ENCODE measurements at regions of chr12 and their contacts with region 1.

Region 1: GRCh38 chr12:119649202-119649808 is 18.6 kb upstream of the PRKAB1 start:
- DNase-seq: no peak
- H3K4me3 Mint-ChIP-seq: no peak overlapping the region
- H3K27ac Mint-ChIP-seq: no peak overlapping the region
- H3K4me1 Mint-ChIP-seq: no peaks in the 10 kb centered on the region
- H3K27me3 Mint-ChIP-seq: peaks cover 8% of the 10 kb centered on the region

Region 2: DNA sequence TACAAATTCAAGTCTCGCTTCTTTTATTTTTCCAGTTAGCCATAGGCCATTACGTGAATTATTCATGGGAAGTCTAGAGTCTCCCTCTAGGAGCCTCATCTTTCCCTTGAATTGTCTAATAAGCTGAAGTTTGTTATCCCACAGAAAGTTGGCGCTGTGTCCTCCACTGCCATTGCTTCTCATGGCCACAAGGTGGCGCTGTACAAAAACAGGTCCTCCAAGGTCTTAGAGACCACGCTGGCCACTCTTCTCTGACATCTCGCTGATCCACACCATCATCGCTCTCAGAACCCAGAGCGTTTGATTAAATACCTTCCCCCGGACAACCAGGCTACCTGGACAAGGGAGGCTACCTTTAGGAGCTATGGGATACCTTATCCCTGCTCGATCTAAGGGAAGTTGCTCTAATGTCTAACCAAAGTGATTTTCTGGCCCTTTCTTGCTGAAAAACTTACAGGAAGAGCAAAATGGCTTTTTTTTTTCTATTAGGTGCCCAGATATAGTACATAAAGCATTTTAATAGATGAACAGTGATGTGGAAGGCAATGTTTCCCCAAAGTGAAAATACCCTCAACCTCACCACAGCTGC is 204.8 kb before region 1 on chr12:
- intact Hi-C with region 1: loop called (anchors 1 kb)
- DNase-seq: peak; percentile 23
- H3K4me3 Mint-ChIP-seq: no peak overlapping the region
- H3K27ac Mint-ChIP-seq: no peak overlapping the region
- H3K4me1 Mint-ChIP-seq: no peaks in the 10 kb centered on the region
- H3K27me3 Mint-ChIP-seq: peaks cover 3% of the 10 kb centered on the region